ENCODE measurements at regions of chr1 and their contacts with region 1.

Region 1: GRCh38 chr1:34984793-34985608 is at the start of gene TMEM35B:
- DNase-seq: peak; percentile 69 to 83 (median 79)
- ATAC-seq: peak; percentile 97
- H3K4me3 ChIP-seq: peak within 1 kb of the TSS; percentile 96
- H3K4me3 Mint-ChIP-seq: peak within 1 kb of the TSS; percentile 95 to 100 (median 98)
- H3K27ac ChIP-seq: peak within 1 kb of the TSS; percentile 94
- H3K27ac Mint-ChIP-seq: peak within 1 kb of the TSS; percentile 92 to 99 (median 97)
- H3K4me1 ChIP-seq: peaks cover 16 to 18% of the 10 kb centered on the region in 2 donors
- H3K4me1 Mint-ChIP-seq: peaks cover 12 to 49% (median 40%) of the 10 kb centered on the region in 7 donors
- H3K27me3 ChIP-seq: no peaks in the 10 kb centered on the region
- H3K27me3 Mint-ChIP-seq: no peaks in the 10 kb centered on the region
- total RNA-seq, gene TMEM35B: 5.4 to 37.7 (median 32.8) TPM

Region 2: GRCh38 chr1:34786521-34787325 is 198.3 kb before region 1 on chr1:
- CTCF ChIA-PET with region 1: no interaction called
- POLR2A ChIA-PET with region 1: no interaction called
- intact Hi-C with region 1: loop called in 1 of 2 experiments (anchors 5 kb)
- DNase-seq: peak; percentile 28 to 59 (median 47)
- ATAC-seq: peak; percentile 88
- H3K4me3 ChIP-seq: no peak overlapping the region
- H3K4me3 Mint-ChIP-seq: no peak overlapping the region
- H3K27ac ChIP-seq: no peak overlapping the region
- H3K27ac Mint-ChIP-seq: no peak overlapping the region
- H3K4me1 ChIP-seq: no peaks in the 10 kb centered on the region
- H3K4me1 Mint-ChIP-seq: peaks cover 0 to 14% (median 3%) of the 10 kb centered on the region in 7 donors
- H3K27me3 ChIP-seq: no peaks in the 10 kb centered on the region
- H3K27me3 Mint-ChIP-seq: peaks cover 19 to 54% (median 43%) of the 10 kb centered on the region in 5 donors

Region 3: DNA sequence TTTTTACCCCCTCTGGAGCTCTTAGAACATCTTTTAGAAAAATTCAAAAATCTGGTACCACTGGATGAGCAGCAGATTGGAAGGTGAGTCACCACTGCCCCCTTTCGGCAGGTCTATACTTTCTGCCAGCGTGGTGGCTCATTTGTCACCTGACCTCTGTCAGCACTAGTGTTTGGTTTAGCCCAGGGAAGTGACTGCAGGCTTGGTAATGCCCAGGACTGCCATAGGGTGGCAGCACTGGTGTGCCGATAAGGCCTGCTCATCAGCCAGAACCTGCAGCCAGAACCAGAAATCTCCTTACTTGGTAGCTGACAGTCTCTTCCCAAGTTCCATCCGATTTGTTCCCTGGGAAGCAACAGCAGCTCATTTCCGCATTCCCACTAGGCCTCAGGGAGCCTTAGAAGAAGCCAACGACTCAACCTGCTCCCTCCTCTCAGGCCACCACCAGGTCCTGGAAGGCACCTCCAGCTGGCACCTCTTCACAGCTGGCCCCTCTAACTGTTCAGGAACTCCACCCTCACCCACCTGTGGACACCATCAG is 132.3 kb before region 1 on chr1:
- CTCF ChIA-PET with region 1: no interaction called
- POLR2A ChIA-PET with region 1: interaction called, 4 read pairs
- intact Hi-C with region 1: loop called (anchors 2 kb)
- DNase-seq: peak; percentile 75 to 91 (median 89)
- ATAC-seq: peak; percentile 100
- H3K4me3 ChIP-seq: no peak overlapping the region
- H3K4me3 Mint-ChIP-seq: peak overlapping the region in 1 of 10 donors; percentile 7
- H3K27ac ChIP-seq: peak overlapping the region; percentile 9
- H3K27ac Mint-ChIP-seq: peak overlapping the region; percentile 6 to 83 (median 53)
- H3K4me1 ChIP-seq: peaks cover 2 to 5% of the 10 kb centered on the region in 2 donors
- H3K4me1 Mint-ChIP-seq: peaks cover 29 to 47% (median 34%) of the 10 kb centered on the region in 7 donors
- H3K27me3 ChIP-seq: no peaks in the 10 kb centered on the region
- H3K27me3 Mint-ChIP-seq: no peaks in the 10 kb centered on the region

Region 4: DNA sequence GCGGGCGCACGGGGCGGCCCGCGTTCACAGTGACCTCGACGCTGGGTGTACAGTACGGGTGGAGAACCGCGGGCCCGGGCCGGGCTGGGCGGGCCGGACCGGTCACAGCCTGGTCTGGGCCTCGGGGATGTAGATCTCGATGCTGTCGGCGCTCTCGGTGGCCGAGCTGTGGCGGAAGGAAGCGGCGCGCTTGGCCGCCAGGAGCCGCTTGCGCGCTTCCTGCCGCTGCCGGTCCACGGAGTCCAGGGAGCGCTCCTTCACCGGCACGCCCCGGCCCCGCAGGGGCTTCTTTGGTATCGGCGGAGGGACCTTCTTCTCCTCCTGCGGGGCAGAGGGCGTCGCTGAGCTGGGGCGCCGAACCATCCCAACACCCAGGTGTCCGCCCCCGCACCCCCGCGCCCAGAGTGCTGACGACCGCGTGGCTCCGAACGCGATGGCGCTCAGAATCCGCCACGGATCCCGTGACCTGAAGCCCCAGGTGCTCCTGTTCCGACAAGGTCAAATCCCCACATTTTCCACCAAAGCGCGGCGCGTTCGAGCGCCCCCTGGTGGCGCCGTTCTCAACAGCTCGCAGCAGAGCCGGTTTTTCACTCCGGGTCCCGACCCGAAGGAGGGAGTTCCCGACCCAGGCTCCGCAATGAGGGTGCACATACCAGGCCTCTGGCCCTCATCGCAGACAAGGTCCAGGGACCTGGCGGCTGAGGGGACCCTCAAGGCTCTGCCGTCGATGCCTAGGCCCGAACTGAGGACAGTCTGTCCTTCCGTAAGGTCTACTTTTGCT is 118.8 kb before region 1 on chr1:
- CTCF ChIA-PET with region 1: no interaction called
- POLR2A ChIA-PET with region 1: interaction called, 11 read pairs
- intact Hi-C with region 1: loop called in 1 of 2 experiments (anchors 1 kb)
- DNase-seq: peak; percentile 87 to 97 (median 90)
- ATAC-seq: peak; percentile 92
- H3K4me3 ChIP-seq: peak overlapping the region; percentile 66
- H3K4me3 Mint-ChIP-seq: peak overlapping the region; percentile 82 to 92 (median 86)
- H3K27ac ChIP-seq: peak overlapping the region; percentile 83
- H3K27ac Mint-ChIP-seq: peak overlapping the region; percentile 80 to 92 (median 88)
- H3K4me1 ChIP-seq: peaks cover 19 to 22% of the 10 kb centered on the region in 2 donors
- H3K4me1 Mint-ChIP-seq: peaks cover 28 to 54% (median 44%) of the 10 kb centered on the region in 7 donors
- H3K27me3 ChIP-seq: no peaks in the 10 kb centered on the region
- H3K27me3 Mint-ChIP-seq: peaks cover 0 to 6% (median under 1%) of the 10 kb centered on the region in 5 donors

Region 5: GRCh38 chr1:34970829-34971228 is 14.2 kb before region 1 on chr1:
- CTCF ChIA-PET with region 1: no interaction called
- POLR2A ChIA-PET with region 1: interaction called, 15 read pairs
- intact Hi-C with region 1: no loop called
- DNase-seq: no peak
- ATAC-seq: no peak
- H3K4me3 ChIP-seq: no peak overlapping the region
- H3K4me3 Mint-ChIP-seq: no peak overlapping the region
- H3K27ac ChIP-seq: no peak overlapping the region
- H3K27ac Mint-ChIP-seq: no peak overlapping the region
- H3K4me1 ChIP-seq: peaks cover 8% of the 10 kb centered on the region in 2 donors
- H3K4me1 Mint-ChIP-seq: peaks cover 0 to 17% (median 4%) of the 10 kb centered on the region in 7 donors
- H3K27me3 ChIP-seq: no peaks in the 10 kb centered on the region
- H3K27me3 Mint-ChIP-seq: peaks cover 0 to 2% (median 0%) of the 10 kb centered on the region in 5 donors

Region 6: GRCh38 chr1:35079003-35079930 is 94.3 kb after region 1 on chr1 and contains the start of gene ZMYM1:
- CTCF ChIA-PET with region 1: interaction called, 4 read pairs
- POLR2A ChIA-PET with region 1: interaction called, 13 read pairs
- intact Hi-C with region 1: loop called in 1 of 2 experiments (anchors 10 kb)
- DNase-seq: peak; percentile 64 to 87 (median 75)
- ATAC-seq: peak; percentile 92
- H3K4me3 ChIP-seq: peak within 1 kb of the TSS; percentile 72
- H3K4me3 Mint-ChIP-seq: peak within 1 kb of the TSS; percentile 84 to 100 (median 98)
- H3K27ac ChIP-seq: peak within 1 kb of the TSS; percentile 86
- H3K27ac Mint-ChIP-seq: peak within 1 kb of the TSS; percentile 97 to 100 (median 99)
- H3K4me1 ChIP-seq: peaks cover 8 to 11% of the 10 kb centered on the region in 2 donors
- H3K4me1 Mint-ChIP-seq: peaks cover 24 to 47% (median 42%) of the 10 kb centered on the region in 7 donors
- H3K27me3 ChIP-seq: no peaks in the 10 kb centered on the region
- H3K27me3 Mint-ChIP-seq: peaks cover 0 to 17% (median 10%) of the 10 kb centered on the region in 5 donors
- total RNA-seq, gene ZMYM1: 11.8 to 21.2 (median 13.9) TPM